ENCODE measurements at regions of chr4 and their contacts with region 1.

Region 1: DNA sequence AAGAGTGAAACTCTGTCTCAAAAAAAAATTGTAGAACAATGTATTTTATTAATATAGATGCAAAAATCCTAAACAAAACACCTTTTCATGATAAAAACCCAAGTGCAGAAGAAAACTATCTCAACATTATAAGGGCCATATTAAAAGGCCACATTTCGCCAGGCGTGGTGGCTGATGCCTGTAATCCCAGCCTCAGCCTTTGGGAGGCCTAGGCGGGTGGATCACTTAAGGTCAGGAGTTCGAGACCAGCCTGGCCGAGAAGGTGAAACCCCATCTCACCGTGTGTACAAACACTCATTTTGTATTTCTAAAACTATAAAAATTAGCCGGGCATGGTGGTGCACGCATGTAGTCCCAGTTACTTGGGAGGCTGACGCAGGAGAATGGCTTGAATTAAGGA is 9.9 kb upstream of the FAM193A start:
- DNase-seq: no peak

Region 2: DNA sequence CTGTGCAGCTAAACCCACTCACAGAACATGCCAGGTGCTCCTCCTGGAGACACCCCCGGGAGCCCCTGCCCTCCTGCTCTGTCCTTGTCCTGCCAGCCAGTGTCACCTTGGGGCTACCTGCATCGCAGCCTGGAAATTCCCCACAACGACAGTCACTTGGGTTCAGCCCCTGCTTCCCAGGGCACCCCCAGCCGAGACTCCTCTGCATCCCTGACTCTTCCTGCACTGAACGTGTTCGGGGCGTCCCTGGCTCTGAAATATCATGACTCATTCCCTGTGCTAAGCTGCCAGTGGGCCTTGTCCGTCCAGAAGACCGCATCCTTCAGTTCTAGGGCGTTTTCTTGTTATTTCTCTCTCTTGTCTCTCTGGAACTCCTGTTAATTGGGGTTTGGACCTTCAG is 102.0 kb before region 1 on chr4:
- intact Hi-C with region 1: loop called in 1 of 2 experiments (anchors 10 kb)
- DNase-seq: no peak

Region 3: DNA sequence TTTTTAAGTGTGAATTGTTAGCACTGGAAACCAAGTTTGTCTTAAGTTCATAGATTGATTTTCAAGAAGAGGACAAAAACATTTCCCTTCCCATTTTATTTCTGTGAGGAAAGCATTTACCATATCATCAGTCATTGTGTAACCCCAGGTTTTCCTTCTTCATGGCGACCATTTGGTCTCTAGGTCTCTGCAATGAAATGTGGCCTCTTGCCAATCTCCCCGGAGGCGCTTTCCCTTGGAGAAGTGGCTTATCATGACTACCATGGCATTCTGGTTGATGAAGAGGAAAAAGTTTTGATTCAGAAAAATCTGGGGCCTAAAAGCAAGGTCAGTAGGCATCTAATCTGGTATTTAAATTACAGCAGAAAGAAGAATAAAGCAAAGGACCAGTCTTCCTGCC is 371.4 kb after region 1 on chr4:
- intact Hi-C with region 1: no loop called
- DNase-seq: no peak